GM10248 (cell line): ENCODE measurements at regions of chr17 and their contacts with region 1.

Region 1: DNA sequence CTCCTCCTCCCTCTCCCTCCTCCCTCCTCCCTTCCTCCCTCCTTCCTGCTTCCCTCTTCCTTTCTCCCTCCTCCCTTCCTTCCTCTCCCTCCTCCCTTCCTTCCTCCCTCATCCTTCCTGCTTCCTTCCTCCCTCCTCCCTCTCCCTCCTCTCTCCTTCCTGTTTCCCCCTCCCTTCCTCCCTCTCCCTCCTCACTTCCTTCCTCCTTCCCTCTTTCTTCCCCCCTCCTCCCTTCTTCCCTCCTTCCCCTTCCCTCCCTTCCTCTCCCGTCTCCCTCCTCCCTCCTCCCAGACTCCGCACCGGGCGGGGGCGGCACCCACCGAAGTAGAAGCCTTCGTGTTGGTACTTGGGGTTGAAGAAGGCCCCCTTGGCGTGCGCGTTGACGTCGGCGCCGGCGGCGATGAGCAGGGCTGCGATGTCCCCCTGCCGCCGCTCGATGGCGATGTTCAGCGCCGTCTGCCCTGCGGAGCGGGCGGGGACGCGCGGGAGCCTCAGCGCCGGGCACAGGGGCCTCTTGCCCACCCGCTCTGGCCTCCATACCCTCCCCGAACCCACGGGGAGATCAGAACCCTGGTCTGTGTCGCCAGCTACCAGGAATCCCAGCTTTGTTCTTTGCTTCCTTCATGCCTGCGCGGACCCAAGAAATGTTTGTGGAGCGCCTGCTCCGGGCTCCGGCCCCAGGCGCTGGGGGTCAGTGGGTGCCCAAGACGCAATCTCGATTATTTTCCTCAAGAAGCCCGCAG is 22.2 kb downstream of the TRPV3 start:
- DNase-seq: peak; percentile 89
- CTCF ChIP-seq: peak; percentile 89

Region 2: DNA sequence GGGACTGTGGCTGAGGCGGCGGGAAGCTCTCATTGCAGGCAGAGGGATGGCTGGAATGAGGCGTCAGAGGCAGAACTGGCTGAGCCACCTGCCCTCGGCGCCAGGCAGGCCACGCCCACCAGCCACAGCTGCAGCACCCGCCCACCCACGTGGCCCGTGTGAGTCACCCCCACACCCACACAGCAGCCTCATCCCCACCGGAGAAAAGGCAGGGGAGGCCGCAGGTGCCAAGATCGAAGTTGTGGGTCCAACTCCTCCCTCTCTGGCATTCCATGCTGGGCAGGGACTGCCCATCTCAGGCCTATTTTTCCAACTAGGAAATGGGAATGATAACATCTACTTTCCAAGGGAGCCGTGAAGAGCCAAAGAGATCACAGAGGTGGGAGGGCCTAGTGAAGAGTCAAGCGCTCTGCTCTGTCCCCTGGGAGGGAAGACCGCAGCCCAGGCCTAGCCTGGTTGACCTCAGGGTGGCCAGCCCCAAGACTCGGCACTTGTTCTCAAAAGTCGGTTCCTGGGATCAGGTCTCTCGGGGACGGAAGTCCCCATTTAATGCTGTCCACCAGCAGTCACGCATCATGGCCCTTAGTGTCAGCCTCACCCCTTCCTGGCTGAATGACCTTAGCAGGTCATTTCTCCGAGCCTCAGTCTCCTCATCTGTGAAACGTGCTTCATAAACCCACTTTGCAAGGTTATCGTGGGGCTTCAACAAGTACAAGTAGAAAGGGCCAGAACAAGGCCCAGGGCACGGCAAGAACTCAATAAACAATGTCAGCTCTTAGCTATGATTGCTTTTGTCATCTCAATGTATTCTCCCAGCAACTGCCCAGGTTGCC is 22.5 kb after region 1 on chr17 and contains the start of gene TRPV3:
- CTCF ChIA-PET with region 1: interaction called, 37 read pairs
- POLR2A ChIA-PET with region 1: no interaction called
- DNase-seq: peak; percentile 92
- CTCF ChIP-seq: no peak

Region 3: GRCh38 chr17:3571043-3571900 is 35.8 kb after region 1 on chr17:
- CTCF ChIA-PET with region 1: no interaction called
- POLR2A ChIA-PET with region 1: no interaction called
- DNase-seq: no peak
- CTCF ChIP-seq: no peak